ENCODE measurements at regions of chr15 and their contacts with region 1.

Region 1: GRCh38 chr15:48877630-48878595 is at the start of gene EID1:
- DNase-seq: peak; percentile 87 to 94 (median 92)
- ATAC-seq: peak; percentile 95
- H3K4me3 ChIP-seq: peak within 1 kb of the TSS; percentile 75
- H3K4me3 Mint-ChIP-seq: peak within 1 kb of the TSS; percentile 93 to 100 (median 99)
- H3K27ac ChIP-seq: peak within 1 kb of the TSS; percentile 70
- H3K27ac Mint-ChIP-seq: peak within 1 kb of the TSS; percentile 95 to 99 (median 98)
- H3K4me1 ChIP-seq: peaks cover 4 to 17% of the 10 kb centered on the region in 2 donors
- H3K4me1 Mint-ChIP-seq: peaks cover 11 to 48% (median 26%) of the 10 kb centered on the region in 7 donors
- H3K27me3 ChIP-seq: no peaks in the 10 kb centered on the region
- H3K27me3 Mint-ChIP-seq: peaks cover 0 to 25% (median 15%) of the 10 kb centered on the region in 5 donors
- total RNA-seq, gene EID1: 40.3 to 96.0 (median 56.5) TPM

Region 2: DNA sequence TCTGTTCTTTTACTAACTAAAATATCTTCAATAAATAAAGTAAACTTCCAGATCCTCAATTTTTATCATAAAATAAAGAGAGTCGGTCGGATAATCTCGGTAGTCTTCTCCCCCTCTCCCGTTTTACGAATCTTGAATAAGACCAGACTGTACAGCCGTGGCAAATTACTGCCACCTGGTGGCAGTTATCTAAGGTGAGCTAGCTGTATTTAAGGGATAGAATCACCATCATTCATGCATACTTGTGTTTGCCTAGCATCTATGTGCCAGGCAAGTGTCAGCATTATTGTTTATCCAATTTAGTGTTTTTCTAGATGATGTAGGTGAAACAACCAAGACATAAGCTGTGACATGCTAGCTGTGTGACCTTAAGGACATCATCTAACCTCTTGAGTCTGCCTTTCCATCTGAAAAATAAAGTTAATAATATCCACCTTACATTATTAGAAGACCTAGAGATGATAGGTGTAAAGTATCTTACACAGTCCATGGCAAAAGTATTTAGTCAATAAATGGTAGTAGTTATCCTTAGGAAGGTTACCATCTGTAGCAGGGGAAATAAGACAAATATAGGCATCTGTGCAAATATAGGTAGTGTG is 525.3 kb before region 1 on chr15:
- CTCF ChIA-PET with region 1: no interaction called
- POLR2A ChIA-PET with region 1: no interaction called
- intact Hi-C with region 1: no loop called
- DNase-seq: peak in 8 of 9 donors; percentile 23 to 57 (median 42)
- ATAC-seq: peak; percentile 83
- H3K4me3 ChIP-seq: no peak overlapping the region
- H3K4me3 Mint-ChIP-seq: peak overlapping the region in 3 of 10 donors; percentile 23 to 61 (median 26)
- H3K27ac ChIP-seq: no peak overlapping the region
- H3K27ac Mint-ChIP-seq: no peak overlapping the region
- H3K4me1 ChIP-seq: no peaks in the 10 kb centered on the region
- H3K4me1 Mint-ChIP-seq: peaks cover 0 to 5% (median 4%) of the 10 kb centered on the region in 7 donors
- H3K27me3 ChIP-seq: no peaks in the 10 kb centered on the region
- H3K27me3 Mint-ChIP-seq: peaks cover 0 to 7% (median 2%) of the 10 kb centered on the region in 5 donors

Region 3: DNA sequence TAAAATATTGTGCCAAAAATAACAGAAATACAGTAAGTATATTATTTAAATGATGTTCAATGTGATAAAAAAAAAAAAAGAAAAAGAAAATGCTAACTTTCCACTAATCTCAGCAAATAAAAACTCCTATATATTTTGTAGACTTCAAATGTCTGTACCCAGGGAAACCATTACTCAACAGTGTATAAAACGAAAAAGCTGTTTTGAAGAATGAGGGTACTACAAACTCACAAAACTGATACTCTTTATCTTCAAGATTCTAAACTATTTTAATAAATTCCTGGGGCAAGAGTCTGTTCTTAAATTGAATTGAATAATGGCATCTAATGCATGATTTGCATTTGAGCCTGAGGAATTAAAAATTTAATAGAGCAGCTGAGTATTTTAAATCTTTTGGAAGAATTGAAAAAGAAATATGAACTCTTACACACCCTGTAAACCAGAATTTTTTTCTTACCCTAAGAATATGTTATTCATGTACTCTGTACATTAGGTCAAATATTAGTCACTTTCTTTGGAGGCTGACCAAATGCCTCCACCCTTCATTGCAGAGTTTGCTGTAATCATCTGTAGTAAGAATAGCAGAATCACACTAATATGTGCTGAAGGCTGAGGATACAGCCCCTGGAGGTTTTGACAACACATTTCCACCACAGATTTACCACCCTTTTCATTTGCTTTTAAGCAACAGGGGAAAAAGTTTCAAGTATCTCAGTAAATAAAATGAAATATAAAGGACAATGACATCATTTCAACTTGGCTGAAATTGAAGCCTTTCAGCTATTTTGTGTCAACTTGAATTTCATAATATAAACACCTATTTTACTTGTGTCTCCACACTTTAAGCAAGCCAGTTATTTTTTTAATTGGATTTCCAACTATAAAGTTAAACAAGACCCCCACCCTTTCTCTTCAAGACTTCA is 312.1 kb before region 1 on chr15:
- CTCF ChIA-PET with region 1: no interaction called
- POLR2A ChIA-PET with region 1: no interaction called
- intact Hi-C with region 1: no loop called
- DNase-seq: no peak
- ATAC-seq: no peak
- H3K4me3 ChIP-seq: no peak overlapping the region
- H3K4me3 Mint-ChIP-seq: no peak overlapping the region
- H3K27ac ChIP-seq: no peak overlapping the region
- H3K27ac Mint-ChIP-seq: no peak overlapping the region
- H3K4me1 ChIP-seq: no peaks in the 10 kb centered on the region
- H3K4me1 Mint-ChIP-seq: no peaks in the 10 kb centered on the region
- H3K27me3 ChIP-seq: peaks cover 0 to 2% of the 10 kb centered on the region in 2 donors
- H3K27me3 Mint-ChIP-seq: peaks cover 9 to 21% (median 15%) of the 10 kb centered on the region in 5 donors

Region 4: DNA sequence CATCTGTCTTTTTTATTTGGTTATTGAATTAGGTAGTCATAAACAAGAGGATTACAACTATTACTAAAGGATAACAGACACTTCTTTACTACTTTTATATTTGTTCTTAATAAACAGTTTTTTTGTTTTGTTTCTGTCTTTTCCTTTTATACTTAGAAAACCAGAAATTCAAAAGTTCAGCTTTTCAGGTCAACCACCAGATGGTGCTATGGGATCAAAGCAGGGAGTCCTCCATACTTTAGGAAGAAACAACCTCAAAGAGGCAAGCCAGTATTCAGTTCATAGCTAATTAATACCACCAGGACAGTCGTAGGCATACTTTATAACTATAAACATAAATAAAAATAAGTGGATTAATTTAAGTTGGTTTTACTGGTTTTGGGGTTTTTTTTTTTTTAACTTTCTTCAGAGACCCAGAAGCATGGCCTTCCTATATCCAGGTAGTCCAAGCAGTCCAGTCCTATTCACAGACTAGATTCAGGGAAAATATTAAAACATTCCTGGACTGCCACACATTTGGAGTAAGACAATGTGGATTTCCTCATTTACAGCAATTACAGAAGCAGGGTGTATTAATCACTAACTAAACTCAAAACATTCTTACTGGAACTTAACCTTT is 16.0 kb before region 1 on chr15:
- CTCF ChIA-PET with region 1: interaction called, 3 read pairs
- POLR2A ChIA-PET with region 1: interaction called, 3 read pairs
- intact Hi-C with region 1: loop called (anchors 1 to 2 kb)
- DNase-seq: peak in 7 of 9 donors; percentile 45 to 75 (median 66)
- ATAC-seq: peak; percentile 80
- H3K4me3 ChIP-seq: no peak overlapping the region
- H3K4me3 Mint-ChIP-seq: no peak overlapping the region
- H3K27ac ChIP-seq: no peak overlapping the region
- H3K27ac Mint-ChIP-seq: no peak overlapping the region
- H3K4me1 ChIP-seq: no peaks in the 10 kb centered on the region
- H3K4me1 Mint-ChIP-seq: peaks cover 0 to 13% (median 3%) of the 10 kb centered on the region in 7 donors
- H3K27me3 ChIP-seq: no peaks in the 10 kb centered on the region
- H3K27me3 Mint-ChIP-seq: peaks cover 2 to 21% (median 7%) of the 10 kb centered on the region in 5 donors

Region 5: GRCh38 chr15:48975472-48976419 is 97.8 kb after region 1 on chr15:
- CTCF ChIA-PET with region 1: interaction called, 3 read pairs
- POLR2A ChIA-PET with region 1: no interaction called
- intact Hi-C with region 1: loop called (anchors 1 kb)
- DNase-seq: peak; percentile 48 to 87 (median 71)
- ATAC-seq: peak; percentile 98
- H3K4me3 ChIP-seq: peak overlapping the region; percentile 58
- H3K4me3 Mint-ChIP-seq: peak overlapping the region; percentile 29 to 75 (median 63)
- H3K27ac ChIP-seq: no peak overlapping the region
- H3K27ac Mint-ChIP-seq: no peak overlapping the region
- H3K4me1 ChIP-seq: peaks cover 3 to 4% of the 10 kb centered on the region in 2 donors
- H3K4me1 Mint-ChIP-seq: peaks cover 0 to 10% (median 0%) of the 10 kb centered on the region in 7 donors
- H3K27me3 ChIP-seq: no peaks in the 10 kb centered on the region
- H3K27me3 Mint-ChIP-seq: peaks cover 4 to 38% (median 19%) of the 10 kb centered on the region in 5 donors

Region 6: GRCh38 chr15:49096090-49096750 is 218.3 kb after region 1 on chr15:
- CTCF ChIA-PET with region 1: no interaction called
- POLR2A ChIA-PET with region 1: no interaction called
- intact Hi-C with region 1: no loop called
- DNase-seq: no peak
- ATAC-seq: no peak
- H3K4me3 ChIP-seq: no peak overlapping the region
- H3K4me3 Mint-ChIP-seq: no peak overlapping the region
- H3K27ac ChIP-seq: no peak overlapping the region
- H3K27ac Mint-ChIP-seq: peak overlapping the region in 1 of 9 donors; percentile 36
- H3K4me1 ChIP-seq: no peaks in the 10 kb centered on the region
- H3K4me1 Mint-ChIP-seq: no peaks in the 10 kb centered on the region
- H3K27me3 ChIP-seq: no peaks in the 10 kb centered on the region
- H3K27me3 Mint-ChIP-seq: no peaks in the 10 kb centered on the region

Region 7: GRCh38 chr15:49169880-49170597 is 292.1 kb after region 1 on chr15 and contains the start of gene GALK2:
- CTCF ChIA-PET with region 1: interaction called, 3 read pairs
- POLR2A ChIA-PET with region 1: interaction called, 7 read pairs
- intact Hi-C with region 1: loop called in 1 of 2 experiments (anchors 1 kb)
- DNase-seq: peak; percentile 42 to 90 (median 75)
- ATAC-seq: peak; percentile 96
- H3K4me3 ChIP-seq: peak within 1 kb of the TSS; percentile 88
- H3K4me3 Mint-ChIP-seq: peak within 1 kb of the TSS; percentile 91 to 100 (median 98)
- H3K27ac ChIP-seq: peak within 1 kb of the TSS; percentile 88
- H3K27ac Mint-ChIP-seq: peak within 1 kb of the TSS; percentile 94 to 99 (median 98)
- H3K4me1 ChIP-seq: peaks cover 4 to 14% of the 10 kb centered on the region in 2 donors
- H3K4me1 Mint-ChIP-seq: peaks cover 24 to 56% (median 46%) of the 10 kb centered on the region in 7 donors
- H3K27me3 ChIP-seq: no peaks in the 10 kb centered on the region
- H3K27me3 Mint-ChIP-seq: no peaks in the 10 kb centered on the region
- total RNA-seq, gene GALK2: 19.4 to 36.6 (median 28.7) TPM

Region 8: GRCh38 chr15:50424066-50424890 is 1546.4 kb after region 1 on chr15 and contains the start of gene USP8:
- CTCF ChIA-PET with region 1: no interaction called
- POLR2A ChIA-PET with region 1: no interaction called
- intact Hi-C with region 1: loop called (anchors 1 to 2 kb)
- DNase-seq: peak; percentile 88 to 95 (median 93)
- ATAC-seq: peak; percentile 98
- H3K4me3 ChIP-seq: peak within 1 kb of the TSS; percentile 91
- H3K4me3 Mint-ChIP-seq: peak within 1 kb of the TSS; percentile 86 to 100 (median 98)
- H3K27ac ChIP-seq: peak within 1 kb of the TSS; percentile 93
- H3K27ac Mint-ChIP-seq: peak within 1 kb of the TSS; percentile 91 to 99 (median 97)
- H3K4me1 ChIP-seq: peaks cover 8 to 20% of the 10 kb centered on the region in 2 donors
- H3K4me1 Mint-ChIP-seq: peaks cover 23 to 59% (median 34%) of the 10 kb centered on the region in 7 donors
- H3K27me3 ChIP-seq: no peaks in the 10 kb centered on the region
- H3K27me3 Mint-ChIP-seq: no peaks in the 10 kb centered on the region
- total RNA-seq, gene USP8: 52.8 to 61.8 (median 57.1) TPM